Common myeloid progenitor, CD34-positive (primary cell): ENCODE measurements at regions of chrX and their contacts with region 1.

Region 1: DNA sequence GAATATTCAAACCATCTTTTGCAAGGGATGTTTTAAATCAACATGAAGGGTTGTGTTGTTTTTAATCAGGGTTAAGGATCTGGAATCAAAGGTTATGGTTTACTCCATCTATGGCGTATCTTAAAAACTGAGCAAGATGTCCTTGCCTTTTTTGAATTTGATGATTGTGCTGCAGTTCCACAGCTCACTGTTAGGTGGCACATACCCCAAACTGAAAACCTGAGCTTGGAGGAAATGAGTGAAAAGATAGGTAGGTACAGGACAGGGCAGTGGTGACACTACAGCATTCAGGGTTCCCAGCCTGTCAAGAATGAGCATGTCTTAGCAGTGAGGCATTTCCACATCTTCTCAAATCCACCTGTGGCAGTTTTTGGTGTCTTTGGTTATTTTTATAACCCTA is 13.1 kb upstream of the EOLA1 start:
- DNase-seq: peak in 2 of 3 donors; percentile 55 to 62
- H3K4me3 ChIP-seq: no peak overlapping the region
- H3K27ac ChIP-seq: no peak overlapping the region
- H3K4me1 ChIP-seq: peaks cover 0 to 33% (median 25%) of the 10 kb centered on the region in 4 experiments
- H3K27me3 ChIP-seq: no peaks in the 10 kb centered on the region

Region 2: DNA sequence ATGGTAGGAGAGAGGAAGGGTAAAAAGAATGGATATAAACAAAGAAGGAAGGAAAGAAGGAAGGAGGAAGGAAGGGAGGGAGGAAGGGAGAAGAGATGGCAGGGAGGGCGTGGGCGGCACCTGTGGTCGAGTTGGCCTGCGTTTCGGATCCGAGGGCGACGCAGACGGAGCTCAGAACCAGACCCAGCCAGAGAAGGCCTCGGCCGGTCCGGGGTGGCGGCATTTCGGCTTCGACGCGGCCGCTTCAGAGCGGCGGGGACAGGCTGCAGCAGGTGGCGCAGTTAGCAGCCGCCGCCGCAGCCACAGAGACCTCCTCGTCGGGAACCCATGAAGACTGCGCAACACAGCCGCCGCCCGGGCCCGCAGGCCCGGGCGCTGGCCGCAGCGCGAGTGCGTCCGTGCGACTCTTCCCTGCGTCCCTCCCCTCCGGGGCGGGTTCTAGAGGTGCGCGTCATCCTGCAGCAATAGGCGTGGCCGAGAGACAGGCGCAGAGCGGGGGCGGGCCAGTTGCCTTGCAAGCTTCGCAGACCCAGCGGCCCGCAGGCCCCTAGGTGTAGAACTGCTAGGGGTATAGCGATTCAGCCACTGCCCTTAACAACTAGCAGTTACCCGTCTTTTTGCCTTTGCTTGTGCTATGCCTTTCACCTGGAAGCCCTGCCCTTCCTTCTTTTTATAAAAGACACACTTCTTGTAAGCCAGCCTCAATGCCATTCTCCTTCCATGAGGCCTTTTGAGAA is 22.6 kb before region 1 on chrX and contains the start of gene IDS:
- CTCF ChIA-PET with region 1: interaction called, 99 read pairs
- POLR2A ChIA-PET with region 1: interaction called, 8 read pairs
- DNase-seq: peak; percentile 87 to 93 (median 92)
- H3K4me3 ChIP-seq: peak within 1 kb of the TSS; percentile 39 to 92 (median 70)
- H3K27ac ChIP-seq: peak within 1 kb of the TSS; percentile 90 to 96
- H3K4me1 ChIP-seq: peaks cover 5 to 40% (median 22%) of the 10 kb centered on the region in 4 experiments
- H3K27me3 ChIP-seq: peaks cover 0 to 6% (median 0%) of the 10 kb centered on the region in 5 experiments

Region 3: GRCh38 chrX:149512225-149512885 is 15.3 kb before region 1 on chrX:
- CTCF ChIA-PET with region 1: interaction called, 99 read pairs
- POLR2A ChIA-PET with region 1: interaction called, 8 read pairs
- DNase-seq: peak in 2 of 3 donors; percentile 65 to 66
- H3K4me3 ChIP-seq: no peak overlapping the region
- H3K27ac ChIP-seq: peak overlapping the region in 1 of 2 experiments; percentile 55
- H3K4me1 ChIP-seq: peaks cover 20 to 73% (median 65%) of the 10 kb centered on the region in 4 experiments
- H3K27me3 ChIP-seq: peaks cover 0 to 4% (median 0%) of the 10 kb centered on the region in 5 experiments